ENCODE measurements at regions of chr19 and their contacts with region 1.

Region 1: GRCh38 chr19:35352448-35353304 is 5.0 kb downstream of the FFAR1 start:
- DNase-seq: peak in 8 of 9 donors; percentile 50 to 73 (median 66)
- ATAC-seq: peak; percentile 85
- H3K4me3 ChIP-seq: no peak overlapping the region
- H3K4me3 Mint-ChIP-seq: peak overlapping the region in 2 of 10 donors; percentile 16 to 21
- H3K27ac ChIP-seq: no peak overlapping the region
- H3K27ac Mint-ChIP-seq: peak overlapping the region in 1 of 9 donors; percentile 54
- H3K4me1 ChIP-seq: peaks cover 3 to 8% of the 10 kb centered on the region in 2 donors
- H3K4me1 Mint-ChIP-seq: peaks cover 9 to 22% (median 12%) of the 10 kb centered on the region in 7 donors
- H3K27me3 ChIP-seq: no peaks in the 10 kb centered on the region
- H3K27me3 Mint-ChIP-seq: no peaks in the 10 kb centered on the region

Region 2: DNA sequence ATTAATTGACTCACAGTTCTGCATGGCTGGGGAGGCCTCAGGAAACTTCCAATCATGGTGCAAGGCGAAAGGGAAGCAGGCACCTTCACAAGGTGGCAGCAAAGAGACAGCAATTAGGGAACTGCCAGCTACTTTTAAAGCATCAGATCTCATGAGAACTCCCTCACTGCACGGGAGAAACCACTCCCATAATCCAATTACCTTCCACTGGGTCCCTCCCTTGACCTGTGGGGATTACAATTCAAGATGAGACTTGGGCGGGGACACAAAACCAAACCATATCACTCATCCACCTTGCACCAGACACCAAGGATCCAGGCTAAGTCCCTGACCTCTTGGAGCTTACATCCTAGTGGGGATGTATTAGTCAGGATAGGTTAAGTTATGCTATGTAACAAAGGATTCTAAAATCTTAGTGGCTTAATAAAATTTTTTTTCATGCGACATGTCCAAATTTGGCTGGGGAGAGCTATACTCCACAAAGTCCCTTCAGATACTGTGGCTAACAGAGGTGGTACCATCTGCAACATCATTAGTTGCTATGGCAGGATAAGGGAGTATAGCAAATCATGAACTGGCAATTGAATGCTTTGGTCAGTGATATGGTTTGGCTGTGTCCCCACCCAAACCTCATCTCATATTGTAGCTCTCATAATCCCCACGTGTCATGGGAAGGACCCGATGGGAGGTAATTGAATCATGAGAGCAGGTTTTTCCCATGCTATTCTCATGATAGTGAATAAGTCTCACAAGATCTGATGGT is 115.9 kb before region 1 on chr19:
- CTCF ChIA-PET with region 1: no interaction called
- POLR2A ChIA-PET with region 1: no interaction called
- intact Hi-C with region 1: loop called in 1 of 2 experiments (anchors 1 kb)
- DNase-seq: peak in 3 of 9 donors; percentile 15 to 35 (median 23)
- ATAC-seq: no peak
- H3K4me3 ChIP-seq: no peak overlapping the region
- H3K4me3 Mint-ChIP-seq: no peak overlapping the region
- H3K27ac ChIP-seq: no peak overlapping the region
- H3K27ac Mint-ChIP-seq: peak overlapping the region in 6 of 9 donors; percentile 11 to 62 (median 26)
- H3K4me1 ChIP-seq: peaks cover 13 to 17% of the 10 kb centered on the region in 2 donors
- H3K4me1 Mint-ChIP-seq: peaks cover 13 to 45% (median 35%) of the 10 kb centered on the region in 7 donors
- H3K27me3 ChIP-seq: no peaks in the 10 kb centered on the region
- H3K27me3 Mint-ChIP-seq: peaks cover 0 to 20% (median 0%) of the 10 kb centered on the region in 5 donors

Region 3: DNA sequence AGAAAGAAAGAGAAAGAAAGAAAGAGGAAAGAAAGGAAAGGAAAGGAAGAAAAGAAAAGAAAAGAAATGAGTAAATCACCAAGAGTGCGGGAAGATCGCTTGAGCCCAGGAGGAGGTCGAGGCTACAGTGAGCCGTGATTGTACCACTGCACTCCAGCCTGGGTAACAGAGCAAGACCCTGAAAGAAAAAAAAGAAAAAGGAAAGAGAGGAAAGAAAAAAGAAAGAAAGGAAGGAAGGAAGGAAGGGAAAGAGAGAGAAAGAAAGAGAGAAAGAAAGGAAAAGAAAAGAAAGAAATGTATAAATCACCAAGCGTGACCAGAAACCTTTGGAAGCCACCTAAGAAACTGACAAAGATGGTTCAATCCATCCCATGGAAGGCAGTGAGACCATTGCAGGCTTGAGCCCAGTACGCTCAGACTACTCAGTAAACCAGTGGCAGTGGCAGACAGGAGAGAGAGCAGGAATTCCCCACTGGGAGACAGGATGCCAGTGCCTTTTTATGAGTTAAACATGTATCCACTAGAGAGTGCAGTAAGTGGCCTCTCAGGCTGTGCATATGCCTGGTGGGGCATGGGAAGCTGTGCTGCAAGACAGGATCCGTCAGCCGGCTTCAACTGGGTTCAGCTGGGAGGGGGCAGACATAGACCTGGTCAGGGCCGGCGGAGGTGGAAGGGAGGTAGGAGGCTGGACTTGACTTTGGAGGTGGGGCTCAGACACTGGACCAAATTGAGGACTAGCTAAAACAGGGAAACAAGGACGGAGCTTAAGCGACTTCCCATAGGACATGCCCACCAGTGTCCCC is 23.0 kb after region 1 on chr19:
- CTCF ChIA-PET with region 1: no interaction called
- POLR2A ChIA-PET with region 1: no interaction called
- intact Hi-C with region 1: no loop called
- DNase-seq: no peak
- ATAC-seq: no peak
- H3K4me3 ChIP-seq: no peak overlapping the region
- H3K4me3 Mint-ChIP-seq: no peak overlapping the region
- H3K27ac ChIP-seq: no peak overlapping the region
- H3K27ac Mint-ChIP-seq: no peak overlapping the region
- H3K4me1 ChIP-seq: no peaks in the 10 kb centered on the region
- H3K4me1 Mint-ChIP-seq: peaks cover 0 to 10% (median 0%) of the 10 kb centered on the region in 7 donors
- H3K27me3 ChIP-seq: no peaks in the 10 kb centered on the region
- H3K27me3 Mint-ChIP-seq: peaks cover 0 to 13% (median 5%) of the 10 kb centered on the region in 5 donors

Region 4: GRCh38 chr19:35462476-35462953 is 109.8 kb after region 1 on chr19:
- CTCF ChIA-PET with region 1: interaction called, 37 read pairs
- POLR2A ChIA-PET with region 1: interaction called, 5 read pairs
- intact Hi-C with region 1: no loop called
- DNase-seq: peak in 8 of 9 donors; percentile 32 to 88 (median 82)
- ATAC-seq: peak; percentile 95
- H3K4me3 ChIP-seq: peak overlapping the region; percentile 6
- H3K4me3 Mint-ChIP-seq: peak overlapping the region; percentile 25 to 87 (median 76)
- H3K27ac ChIP-seq: peak overlapping the region; percentile 22
- H3K27ac Mint-ChIP-seq: peak overlapping the region; percentile 75 to 98 (median 91)
- H3K4me1 ChIP-seq: peaks cover 14 to 29% of the 10 kb centered on the region in 2 donors
- H3K4me1 Mint-ChIP-seq: peaks cover 30 to 37% (median 35%) of the 10 kb centered on the region in 7 donors
- H3K27me3 ChIP-seq: no peaks in the 10 kb centered on the region
- H3K27me3 Mint-ChIP-seq: peaks cover 0 to 8% (median 0%) of the 10 kb centered on the region in 5 donors

Region 5: GRCh38 chr19:35468637-35469036 is 116.0 kb after region 1 on chr19:
- CTCF ChIA-PET with region 1: interaction called, 37 read pairs
- POLR2A ChIA-PET with region 1: interaction called, 3 read pairs
- intact Hi-C with region 1: loop called (anchors 1 kb)
- DNase-seq: peak; percentile 30 to 66 (median 57)
- ATAC-seq: peak; percentile 99
- H3K4me3 ChIP-seq: no peak overlapping the region
- H3K4me3 Mint-ChIP-seq: no peak overlapping the region
- H3K27ac ChIP-seq: no peak overlapping the region
- H3K27ac Mint-ChIP-seq: no peak overlapping the region
- H3K4me1 ChIP-seq: peaks cover 0 to 10% of the 10 kb centered on the region in 2 donors
- H3K4me1 Mint-ChIP-seq: peaks cover 4 to 9% (median 7%) of the 10 kb centered on the region in 7 donors
- H3K27me3 ChIP-seq: no peaks in the 10 kb centered on the region
- H3K27me3 Mint-ChIP-seq: peaks cover 0 to 8% (median 0%) of the 10 kb centered on the region in 5 donors

Region 6: DNA sequence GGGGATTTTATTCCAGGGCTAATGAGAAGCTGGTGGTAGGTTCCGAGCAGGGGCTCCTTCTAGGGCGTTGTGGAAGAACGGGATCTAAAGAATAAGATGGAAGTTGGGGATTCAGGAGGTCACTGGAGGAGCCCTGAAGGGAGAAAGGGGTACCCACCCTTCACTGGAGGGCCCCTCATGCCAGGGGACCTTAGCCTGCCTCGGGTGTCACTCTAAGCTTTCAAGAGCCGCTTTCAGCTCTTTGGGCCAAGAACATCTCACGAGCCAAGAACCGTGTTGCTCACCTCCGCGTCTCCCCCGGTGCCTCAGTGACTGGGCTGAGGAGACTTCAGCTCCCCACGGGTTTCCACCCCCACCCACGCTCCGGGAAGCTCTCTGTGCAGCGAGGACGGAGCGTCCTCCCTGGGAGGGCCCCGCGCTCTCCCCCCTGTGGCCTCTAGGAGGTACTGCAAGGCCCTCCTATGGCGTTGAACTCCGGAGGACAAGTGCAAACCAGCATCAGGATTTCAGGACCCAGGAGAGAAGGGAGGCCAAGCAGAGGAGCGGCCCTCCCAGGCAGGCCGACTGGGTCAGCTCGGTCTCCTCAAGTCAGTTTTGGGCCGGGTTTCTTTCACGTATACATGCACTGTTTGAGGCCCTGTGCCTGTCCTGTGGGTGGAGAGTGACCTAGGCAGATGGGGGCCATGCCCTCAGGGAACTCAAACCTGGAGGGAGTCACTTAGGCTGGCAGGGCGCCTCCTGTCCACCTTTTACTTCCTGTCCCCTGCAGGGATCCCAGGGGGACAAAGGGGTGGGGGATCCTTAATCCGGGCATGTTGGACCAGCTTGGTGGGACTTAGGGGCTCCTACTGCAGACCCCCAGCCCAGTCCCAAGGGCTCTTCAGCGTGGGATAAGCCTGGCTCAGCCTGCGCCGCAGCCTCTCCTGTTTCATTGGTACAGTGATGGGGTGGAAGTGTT is 142.7 kb after region 1 on chr19:
- CTCF ChIA-PET with region 1: interaction called, 15 read pairs
- POLR2A ChIA-PET with region 1: no interaction called
- intact Hi-C with region 1: loop called in 1 of 2 experiments (anchors 1 kb)
- DNase-seq: peak; percentile 38 to 81 (median 60)
- ATAC-seq: peak; percentile 99
- H3K4me3 ChIP-seq: no peak overlapping the region
- H3K4me3 Mint-ChIP-seq: peak overlapping the region in 7 of 10 donors; percentile 17 to 62 (median 45)
- H3K27ac ChIP-seq: no peak overlapping the region
- H3K27ac Mint-ChIP-seq: peak overlapping the region in 3 of 9 donors; percentile 22 to 62 (median 47)
- H3K4me1 ChIP-seq: no peaks in the 10 kb centered on the region
- H3K4me1 Mint-ChIP-seq: peaks cover 0 to 9% (median 6%) of the 10 kb centered on the region in 7 donors
- H3K27me3 ChIP-seq: no peaks in the 10 kb centered on the region
- H3K27me3 Mint-ChIP-seq: peaks cover 0 to 12% (median 0%) of the 10 kb centered on the region in 5 donors